ENCODE measurements at regions of chr1 and their contacts with region 1.

Region 1: GRCh38 chr1:197577580-197577979 is 197.7 kb downstream of the DENND1B start:
- DNase-seq: no peak
- H3K4me3 ChIP-seq: no peak overlapping the region
- H3K27ac ChIP-seq: no peak overlapping the region
- H3K4me1 ChIP-seq: no peaks in the 10 kb centered on the region
- H3K27me3 ChIP-seq: no peaks in the 10 kb centered on the region
- CTCF ChIP-seq: no peak

Region 2: GRCh38 chr1:197606168-197606845 is 28.7 kb after region 1 on chr1:
- CTCF ChIA-PET with region 1: no interaction called
- POLR2A ChIA-PET with region 1: no interaction called
- intact Hi-C with region 1: no loop called
- DNase-seq: no peak
- H3K4me3 ChIP-seq: no peak overlapping the region
- H3K27ac ChIP-seq: no peak overlapping the region
- H3K4me1 ChIP-seq: no peaks in the 10 kb centered on the region
- H3K27me3 ChIP-seq: no peaks in the 10 kb centered on the region
- CTCF ChIP-seq: no peak

Region 3: DNA sequence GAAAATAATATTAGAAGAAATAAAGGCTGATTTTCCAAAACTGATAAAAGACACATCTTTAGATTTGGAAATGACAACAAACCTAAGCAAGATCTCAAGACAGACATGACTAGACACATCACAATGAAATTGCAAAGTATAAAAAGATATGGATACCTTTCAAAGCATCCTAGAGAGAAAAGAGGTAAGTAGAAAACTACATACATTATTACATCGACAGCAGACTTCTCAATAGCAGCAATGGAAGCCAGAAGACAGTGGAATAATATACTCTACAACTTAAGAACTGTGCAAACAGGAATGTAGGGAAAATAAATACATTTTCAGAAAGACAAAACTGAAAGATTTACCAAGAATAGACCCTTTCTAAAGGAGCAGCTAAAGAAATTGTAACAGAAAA is 147.5 kb after region 1 on chr1:
- CTCF ChIA-PET with region 1: no interaction called
- POLR2A ChIA-PET with region 1: no interaction called
- intact Hi-C with region 1: no loop called
- DNase-seq: peak; percentile 6
- H3K4me3 ChIP-seq: no peak overlapping the region
- H3K27ac ChIP-seq: no peak overlapping the region
- H3K4me1 ChIP-seq: no peaks in the 10 kb centered on the region
- H3K27me3 ChIP-seq: no peaks in the 10 kb centered on the region
- CTCF ChIP-seq: no peak

Region 4: GRCh38 chr1:197982256-197982655 is 404.7 kb after region 1 on chr1:
- CTCF ChIA-PET with region 1: no interaction called
- POLR2A ChIA-PET with region 1: interaction called, 19 read pairs
- intact Hi-C with region 1: no loop called
- DNase-seq: no peak
- H3K4me3 ChIP-seq: no peak overlapping the region
- H3K27ac ChIP-seq: no peak overlapping the region
- H3K4me1 ChIP-seq: no peaks in the 10 kb centered on the region
- H3K27me3 ChIP-seq: no peaks in the 10 kb centered on the region
- CTCF ChIP-seq: no peak